ENCODE measurements at regions of chr12 and their contacts with region 1.

Region 1: GRCh38 chr12:57952766-57953165 is 11.4 kb downstream of the ATP23 start:
- DNase-seq: no peak

Region 2: DNA sequence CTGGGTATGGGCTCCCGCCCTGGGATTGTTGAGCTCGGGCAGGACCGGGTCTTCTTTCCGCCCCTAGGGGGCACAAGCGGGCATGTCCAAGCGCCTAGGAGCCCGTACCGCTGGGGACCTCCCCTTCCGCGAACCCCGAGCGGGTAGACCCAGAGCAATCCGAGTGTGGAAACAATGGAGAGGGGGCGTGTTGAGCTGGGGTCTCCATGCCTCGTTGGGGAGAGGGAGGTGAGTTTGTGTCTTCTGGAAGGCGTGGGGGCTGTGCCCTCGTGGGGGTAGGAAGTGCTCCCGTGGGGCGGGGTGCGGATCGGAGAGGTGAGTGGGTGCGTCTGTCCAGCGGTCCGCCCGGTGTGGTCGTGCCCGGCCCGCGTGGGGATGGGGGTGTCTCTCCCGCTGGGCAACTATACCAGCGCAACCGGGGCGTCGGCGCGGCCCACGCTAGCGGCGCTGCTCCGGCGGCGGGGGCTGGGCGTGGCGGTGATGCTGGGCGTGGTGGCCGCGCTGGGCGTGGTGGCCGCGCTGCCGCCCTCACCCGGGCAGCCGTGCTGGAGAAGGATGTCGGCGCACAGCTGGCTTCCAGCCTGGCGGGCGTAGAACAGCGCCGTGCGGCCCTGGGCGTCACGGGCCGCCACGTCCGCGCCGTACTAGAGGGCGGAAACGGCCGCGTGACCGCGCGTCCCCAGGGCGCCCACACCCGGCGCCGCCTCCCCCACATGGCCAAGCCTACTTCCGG is 226.4 kb before region 1 on chr12:
- CTCF ChIA-PET with region 1: no interaction called
- POLR2A ChIA-PET with region 1: no interaction called
- DNase-seq: peak; percentile 92

Region 3: DNA sequence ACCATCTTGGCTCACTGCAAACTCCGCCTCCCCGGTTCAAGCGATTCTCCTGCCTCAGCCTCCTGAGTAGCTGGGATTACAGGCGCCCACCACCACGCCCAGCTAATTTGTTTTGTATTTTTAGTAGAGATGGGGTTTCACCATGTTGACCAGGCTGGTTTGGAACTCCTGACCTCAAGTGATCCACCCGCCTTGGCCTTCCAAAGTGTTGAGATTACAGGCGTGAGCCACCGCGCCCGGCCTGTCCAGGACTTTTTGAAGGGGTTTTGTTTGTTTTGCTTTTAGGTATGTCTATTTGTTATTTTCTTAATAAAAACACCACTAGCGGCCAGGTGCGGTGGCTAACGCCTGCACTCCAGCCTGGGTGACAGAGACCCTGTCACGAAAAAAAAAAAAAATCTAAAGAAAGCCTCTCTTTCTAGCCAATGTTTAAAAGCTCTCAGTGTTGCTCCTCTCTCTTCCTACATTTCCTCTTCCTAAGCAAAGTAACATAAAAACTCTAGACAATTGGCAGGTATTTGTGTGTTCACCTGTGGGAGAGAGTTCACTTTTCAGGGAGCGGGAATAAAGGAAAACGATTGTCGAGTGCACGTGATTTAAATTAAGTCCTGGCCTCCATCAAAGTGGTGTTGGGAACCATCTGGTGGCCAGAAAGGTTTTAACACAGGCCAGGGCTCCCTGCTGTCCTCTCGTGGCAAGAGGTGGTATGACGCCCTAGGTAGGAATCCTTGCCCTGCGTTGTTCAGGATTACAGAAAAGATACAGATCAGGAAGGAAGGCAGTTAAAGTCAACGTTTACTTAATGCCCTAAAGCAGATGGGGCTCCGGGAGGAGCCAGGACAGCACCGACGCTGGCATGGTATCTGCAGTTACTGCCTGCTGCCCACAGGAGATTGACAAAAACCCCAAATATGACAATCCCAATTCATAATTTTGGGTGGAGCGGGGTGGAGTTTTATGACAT is 47.6 kb before region 1 on chr12:
- CTCF ChIA-PET with region 1: no interaction called
- POLR2A ChIA-PET with region 1: no interaction called
- DNase-seq: peak; percentile 87

Region 4: DNA sequence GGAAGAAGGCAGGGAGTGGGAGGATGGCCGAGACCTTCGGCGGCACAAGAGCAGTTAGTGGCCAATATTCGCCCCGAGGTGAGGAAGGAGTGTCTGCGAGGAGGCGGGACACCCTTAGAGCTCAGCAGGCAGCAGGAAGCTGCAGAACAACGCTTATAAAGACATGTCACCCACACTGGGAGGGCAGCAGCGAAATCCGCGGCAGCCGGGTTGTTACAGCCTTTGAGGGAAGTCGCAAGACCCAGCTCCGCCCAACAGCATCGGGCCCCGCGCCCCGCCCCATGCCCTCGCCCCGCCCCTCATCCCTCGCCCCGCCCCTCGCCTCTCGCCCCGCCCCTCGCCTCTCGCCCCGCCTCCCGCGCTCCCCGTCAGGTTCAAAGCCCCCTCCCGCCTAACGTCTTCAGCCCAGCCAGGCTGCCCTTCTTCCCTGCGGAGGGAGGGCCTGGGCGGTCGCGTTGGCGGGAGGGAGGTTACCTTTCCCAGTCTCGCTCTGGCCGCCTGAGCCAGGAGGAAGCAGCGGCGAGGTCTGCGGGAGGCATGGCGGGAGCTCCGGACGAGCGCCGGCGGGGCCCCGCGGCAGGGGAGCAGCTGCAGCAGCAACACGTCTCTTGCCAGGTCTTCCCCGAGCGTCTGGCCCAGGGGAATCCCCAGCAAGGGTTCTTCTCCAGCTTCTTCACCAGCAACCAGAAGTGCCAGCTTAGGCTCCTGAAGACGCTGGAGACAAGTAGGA is 11.4 kb before region 1 on chr12 and contains the start of gene ATP23:
- CTCF ChIA-PET with region 1: interaction called, 5 read pairs
- POLR2A ChIA-PET with region 1: interaction called, 10 read pairs
- DNase-seq: peak; percentile 94

Region 5: GRCh38 chr12:58034311-58035098 is 81.7 kb after region 1 on chr12:
- CTCF ChIA-PET with region 1: no interaction called
- POLR2A ChIA-PET with region 1: no interaction called
- DNase-seq: no peak